Transverse colon (tissue), 4 donors: ENCODE measurements at regions of chr12 and their contacts with region 1.

Region 1: GRCh38 chr12:66409195-66409871 is 107.0 kb downstream of the HELB start:
- DNase-seq: no peak
- H3K4me3 ChIP-seq: no peak overlapping the region
- H3K27ac ChIP-seq: no peak overlapping the region
- H3K4me1 ChIP-seq: peaks cover 0 to 4% (median 0%) of the 10 kb centered on the region in 4 donors
- H3K27me3 ChIP-seq: no peaks in the 10 kb centered on the region
- CTCF ChIP-seq: peak; percentile 54 to 60 (median 58)
- EP300 ChIP-seq: no peak
- POLR2A ChIP-seq: no peak

Region 2: DNA sequence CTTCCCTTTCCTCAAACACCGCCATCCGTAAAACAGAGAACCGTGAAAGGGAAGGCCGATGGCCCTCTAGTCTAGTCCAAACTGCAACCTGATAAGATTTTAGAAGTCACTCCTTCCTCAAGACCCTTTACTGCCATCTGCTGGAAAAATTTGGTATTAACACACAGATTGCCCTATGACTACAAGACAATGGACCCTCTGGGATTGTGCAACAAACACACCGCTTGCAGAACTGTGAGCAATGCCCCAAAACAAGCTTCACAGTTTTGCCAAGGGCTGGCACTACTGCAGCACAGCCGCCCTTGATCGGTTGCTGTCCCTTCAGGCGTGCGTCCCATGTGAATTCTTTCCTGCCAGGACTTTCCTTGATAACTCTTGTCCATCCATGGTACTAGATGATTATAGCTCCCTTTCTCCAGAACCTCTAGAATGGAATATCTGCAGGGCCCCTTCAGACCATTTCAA is 301.9 kb before region 1 on chr12:
- in situ Hi-C with region 1: loop called in 1 of 4 experiments (anchors 25 kb)
- intact Hi-C with region 1: no loop called
- DNase-seq: peak; percentile 35
- H3K4me3 ChIP-seq: no peak overlapping the region
- H3K27ac ChIP-seq: no peak overlapping the region
- H3K4me1 ChIP-seq: no peaks in the 10 kb centered on the region
- H3K27me3 ChIP-seq: no peaks in the 10 kb centered on the region
- CTCF ChIP-seq: peak; percentile 70 to 83 (median 77)
- EP300 ChIP-seq: no peak
- POLR2A ChIP-seq: no peak

Region 3: GRCh38 chr12:66130277-66131066 is 278.9 kb before region 1 on chr12 and contains the start of gene LLPH:
- in situ Hi-C with region 1: loop called in 2 of 4 experiments (anchors 25 kb)
- intact Hi-C with region 1: no loop called
- DNase-seq: peak; percentile 93
- H3K4me3 ChIP-seq: peak within 1 kb of the TSS; percentile 61 to 97 (median 76)
- H3K27ac ChIP-seq: peak within 1 kb of the TSS; percentile 71 to 79 (median 78)
- H3K4me1 ChIP-seq: peaks cover 0 to 27% (median 17%) of the 10 kb centered on the region in 4 donors
- H3K27me3 ChIP-seq: no peaks in the 10 kb centered on the region
- CTCF ChIP-seq: no peak
- EP300 ChIP-seq: no peak
- POLR2A ChIP-seq: peak; percentile 83
- total RNA-seq, gene LLPH: 3.5 to 4.9 (median 3.9) TPM

Region 4: DNA sequence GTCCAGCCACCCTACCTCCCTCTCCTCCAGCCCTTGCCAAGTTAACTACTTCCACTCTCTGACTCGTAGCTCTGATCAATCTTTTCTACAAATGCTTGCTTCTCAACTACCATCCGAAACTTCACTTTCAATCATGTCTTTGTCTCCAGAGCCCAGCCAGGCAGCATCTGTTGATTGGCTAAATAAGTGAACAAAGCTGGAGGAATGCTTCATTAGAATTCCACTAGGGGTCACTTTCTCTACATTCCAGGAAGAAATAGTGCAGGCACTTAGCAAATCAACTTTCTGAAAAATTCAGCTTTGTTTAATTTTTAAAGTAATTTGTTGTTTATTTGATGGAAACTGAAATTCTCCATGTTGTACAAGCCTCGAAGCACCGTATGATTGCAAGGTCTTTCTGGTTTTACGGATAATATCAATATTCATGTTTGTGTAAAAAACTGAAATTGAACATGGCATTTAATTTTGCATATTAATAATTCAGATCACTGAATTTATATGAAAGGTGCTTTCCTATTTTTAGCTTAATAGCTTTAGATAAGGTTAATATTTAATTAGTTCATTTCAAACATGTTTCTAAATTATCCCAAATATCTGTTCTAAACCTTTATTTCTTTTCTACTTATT is 139.5 kb before region 1 on chr12:
- in situ Hi-C with region 1: loop called in 3 of 4 experiments (anchors 5 to 10 kb)
- intact Hi-C with region 1: no loop called
- DNase-seq: no peak
- H3K4me3 ChIP-seq: no peak overlapping the region
- H3K27ac ChIP-seq: no peak overlapping the region
- H3K4me1 ChIP-seq: no peaks in the 10 kb centered on the region
- H3K27me3 ChIP-seq: no peaks in the 10 kb centered on the region
- CTCF ChIP-seq: peak; percentile 52 to 66 (median 60)
- EP300 ChIP-seq: no peak
- POLR2A ChIP-seq: no peak

Region 5: DNA sequence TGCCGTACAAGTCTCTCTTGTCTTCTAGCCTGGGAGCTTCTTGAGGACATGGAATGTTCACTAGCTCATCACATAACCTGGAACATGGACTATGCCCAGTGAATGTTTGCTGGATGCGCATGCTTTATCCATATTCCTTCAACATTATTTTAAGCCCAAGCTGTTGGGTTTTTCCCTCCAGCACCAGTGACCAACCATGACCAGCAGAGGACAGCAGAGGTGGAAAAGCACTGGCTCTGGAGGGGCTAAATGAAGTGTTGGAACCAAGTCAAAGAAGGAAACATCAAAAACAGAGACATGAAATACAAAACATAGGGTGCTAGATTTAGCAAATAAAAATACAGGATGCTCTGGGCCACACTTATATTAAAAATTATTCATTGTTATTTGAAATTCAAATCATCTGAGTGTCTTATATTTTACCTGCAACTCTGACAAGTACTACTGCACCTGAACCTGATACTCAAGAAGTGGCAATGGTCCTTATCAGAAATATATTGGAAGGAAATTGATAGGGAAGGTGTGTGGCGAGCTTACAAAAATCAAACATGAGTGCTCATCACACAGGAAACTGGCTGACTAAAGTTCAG is 130.1 kb before region 1 on chr12:
- in situ Hi-C with region 1: loop called in 3 of 4 experiments (anchors 5 to 10 kb)
- intact Hi-C with region 1: no loop called
- DNase-seq: no peak
- H3K4me3 ChIP-seq: no peak overlapping the region
- H3K27ac ChIP-seq: no peak overlapping the region
- H3K4me1 ChIP-seq: no peaks in the 10 kb centered on the region
- H3K27me3 ChIP-seq: no peaks in the 10 kb centered on the region
- CTCF ChIP-seq: peak; percentile 29 to 50 (median 45)
- EP300 ChIP-seq: no peak
- POLR2A ChIP-seq: no peak

Region 6: DNA sequence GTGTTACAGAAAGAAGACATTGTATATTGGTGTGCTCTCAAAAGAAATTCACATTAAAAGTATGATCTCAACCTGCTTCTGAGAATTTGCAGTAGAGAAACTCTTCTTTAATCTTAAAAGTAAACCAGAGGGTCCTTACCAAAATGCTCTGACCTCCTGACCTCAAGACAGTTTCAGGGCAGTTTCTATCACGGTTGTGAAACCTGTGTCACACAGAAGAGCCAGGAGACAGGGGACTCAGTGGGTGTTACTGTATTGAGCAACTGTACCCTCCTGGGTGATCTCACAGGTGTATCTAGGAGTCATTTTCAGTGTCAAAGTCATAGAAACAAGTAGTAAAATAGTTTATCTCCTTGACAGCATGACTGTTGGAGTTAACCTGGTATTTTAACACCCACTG is 91.5 kb after region 1 on chr12:
- in situ Hi-C with region 1: loop called in 1 of 4 experiments (anchors 25 kb)
- intact Hi-C with region 1: no loop called
- DNase-seq: no peak
- H3K4me3 ChIP-seq: no peak overlapping the region
- H3K27ac ChIP-seq: no peak overlapping the region
- H3K4me1 ChIP-seq: no peaks in the 10 kb centered on the region
- H3K27me3 ChIP-seq: no peaks in the 10 kb centered on the region
- CTCF ChIP-seq: no peak
- EP300 ChIP-seq: no peak
- POLR2A ChIP-seq: no peak